AG04449 (cell line): ENCODE measurements at regions of chr16 and their contacts with region 1.

Region 1: DNA sequence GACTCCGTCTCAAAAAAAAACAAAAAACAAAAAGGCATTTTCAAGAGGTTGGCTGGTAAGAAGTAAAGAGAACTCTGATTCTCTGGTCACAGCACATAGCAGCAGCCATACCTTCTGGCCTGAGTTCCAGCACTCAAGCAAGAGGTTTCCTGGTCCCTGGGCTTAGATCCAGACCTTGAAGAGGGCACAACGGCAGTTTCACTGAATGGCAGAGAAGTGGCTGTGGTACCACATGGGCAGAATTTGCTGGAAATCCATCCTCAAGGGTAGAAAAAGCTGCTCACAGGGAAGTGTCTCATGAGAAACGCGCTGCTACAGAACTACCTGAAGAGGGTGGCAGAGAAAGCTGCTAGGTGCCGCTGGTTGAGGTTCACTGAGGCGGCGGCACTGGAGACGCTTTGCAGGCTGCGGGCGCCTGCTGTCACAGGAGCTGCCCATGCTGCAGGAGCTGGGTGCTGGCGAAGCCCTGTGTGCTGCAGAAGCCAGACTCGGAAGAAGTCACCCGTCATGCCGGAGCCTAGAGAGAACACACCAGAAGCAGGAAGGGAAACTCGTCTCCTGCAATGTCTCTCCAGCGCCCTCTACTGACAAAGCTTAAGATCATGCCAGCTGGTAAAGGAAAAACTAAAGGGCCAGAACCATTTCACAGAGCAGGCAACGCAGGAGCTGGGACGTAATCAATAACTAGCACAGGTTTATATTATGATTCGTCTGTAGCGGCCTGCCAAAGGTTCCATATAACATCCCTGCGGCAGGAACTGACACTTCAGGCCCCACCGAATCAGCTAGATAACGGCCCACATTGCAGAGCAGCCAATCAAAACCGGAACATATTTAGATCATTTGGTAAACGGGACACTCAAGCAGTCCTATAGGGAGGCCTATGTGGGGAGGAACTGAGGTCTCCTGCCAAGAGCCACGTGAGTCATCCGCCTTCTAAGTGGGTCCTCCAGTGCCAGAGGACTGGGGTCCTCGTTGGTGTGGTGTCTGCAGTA is 5.4 kb upstream of the ZNF213 start:
- DNase-seq: no peak
- H3K4me3 ChIP-seq: peak overlapping the region; percentile 48
- CTCF ChIP-seq: peak; percentile 86

Region 2: GRCh38 chr16:2948807-2949738 is 180.4 kb before region 1 on chr16:
- CTCF ChIA-PET with region 1: no interaction called
- POLR2A ChIA-PET with region 1: no interaction called
- DNase-seq: no peak
- H3K4me3 ChIP-seq: no peak overlapping the region
- CTCF ChIP-seq: no peak

Region 3: DNA sequence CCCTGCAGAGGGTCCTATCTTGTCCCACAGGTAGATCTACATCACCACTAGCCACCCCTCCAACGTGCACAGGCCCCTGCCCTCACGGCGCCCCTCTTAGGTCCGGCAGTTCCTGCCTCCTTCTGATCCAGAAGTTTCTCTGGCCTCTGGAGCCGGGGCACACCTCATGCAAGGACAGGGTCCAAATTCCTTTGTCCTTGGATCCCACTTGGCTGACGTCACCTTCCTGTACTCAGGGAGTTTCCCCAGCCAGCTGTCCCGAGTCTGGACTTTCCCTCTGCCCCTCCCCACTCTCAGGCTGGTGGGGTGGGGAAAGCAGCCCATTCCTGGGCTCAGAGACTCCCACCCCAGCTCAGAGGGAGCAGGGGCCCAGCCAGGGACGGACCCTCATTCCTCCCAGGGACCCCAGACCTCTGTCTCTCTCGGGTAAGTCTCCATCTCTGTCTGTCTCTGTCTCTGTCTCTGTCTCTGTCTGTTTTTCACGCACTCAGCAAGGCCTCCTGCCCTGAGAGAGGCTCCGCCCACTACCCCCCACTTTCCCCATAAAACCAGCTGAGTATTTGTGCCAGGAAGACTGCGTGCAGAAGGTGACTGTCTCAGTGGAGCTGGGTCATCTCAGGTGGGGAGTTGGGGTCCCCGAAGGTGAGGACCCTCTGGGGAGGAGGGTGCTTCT is 64.2 kb before region 1 on chr16 and contains the start of gene IL32:
- CTCF ChIA-PET with region 1: interaction called, 88 read pairs
- POLR2A ChIA-PET with region 1: no interaction called
- DNase-seq: peak; percentile 36
- H3K4me3 ChIP-seq: peak within 1 kb of the TSS; percentile 25
- CTCF ChIP-seq: no peak

Region 4: GRCh38 chr16:3106205-3106928 is 23.1 kb before region 1 on chr16:
- CTCF ChIA-PET with region 1: interaction called, 68 read pairs
- POLR2A ChIA-PET with region 1: no interaction called
- DNase-seq: no peak
- H3K4me3 ChIP-seq: peak overlapping the region; percentile 66
- CTCF ChIP-seq: no peak

Region 5: DNA sequence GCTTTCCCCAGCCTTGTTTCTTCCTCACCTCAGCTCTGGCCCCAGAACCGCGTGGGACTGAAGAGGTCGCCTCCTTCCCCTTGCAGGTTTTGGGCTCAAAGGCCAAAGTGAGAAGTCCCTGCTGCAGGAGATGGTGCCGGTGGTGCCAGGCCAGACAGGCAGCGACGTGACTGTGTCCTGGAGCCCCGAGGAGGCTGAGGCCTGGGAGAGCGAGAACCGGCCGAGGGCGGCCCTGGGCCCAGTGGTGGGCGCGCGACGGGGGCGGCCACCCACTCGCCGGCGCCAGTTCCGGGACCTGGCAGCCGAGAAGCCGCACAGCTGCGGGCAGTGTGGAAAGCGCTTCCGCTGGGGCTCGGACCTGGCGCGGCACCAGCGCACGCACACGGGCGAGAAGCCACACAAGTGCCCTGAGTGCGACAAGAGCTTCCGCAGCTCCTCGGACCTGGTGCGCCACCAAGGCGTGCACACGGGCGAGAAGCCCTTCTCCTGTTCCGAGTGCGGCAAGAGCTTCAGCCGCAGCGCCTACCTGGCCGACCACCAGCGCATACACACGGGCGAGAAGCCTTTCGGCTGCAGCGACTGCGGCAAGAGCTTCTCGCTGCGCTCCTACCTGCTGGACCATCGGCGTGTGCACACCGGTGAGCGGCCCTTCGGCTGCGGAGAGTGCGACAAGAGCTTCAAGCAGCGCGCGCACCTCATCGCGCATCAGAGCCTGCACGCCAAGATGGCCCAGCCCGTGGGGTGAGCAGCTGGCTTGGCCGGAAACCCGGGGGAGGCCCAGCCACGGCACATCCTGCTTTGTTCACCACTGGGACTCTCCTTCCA is 11.4 kb after region 1 on chr16:
- CTCF ChIA-PET with region 1: interaction called, 206 read pairs
- POLR2A ChIA-PET with region 1: interaction called, 7 read pairs
- DNase-seq: no peak
- H3K4me3 ChIP-seq: no peak overlapping the region
- CTCF ChIP-seq: no peak

Region 6: DNA sequence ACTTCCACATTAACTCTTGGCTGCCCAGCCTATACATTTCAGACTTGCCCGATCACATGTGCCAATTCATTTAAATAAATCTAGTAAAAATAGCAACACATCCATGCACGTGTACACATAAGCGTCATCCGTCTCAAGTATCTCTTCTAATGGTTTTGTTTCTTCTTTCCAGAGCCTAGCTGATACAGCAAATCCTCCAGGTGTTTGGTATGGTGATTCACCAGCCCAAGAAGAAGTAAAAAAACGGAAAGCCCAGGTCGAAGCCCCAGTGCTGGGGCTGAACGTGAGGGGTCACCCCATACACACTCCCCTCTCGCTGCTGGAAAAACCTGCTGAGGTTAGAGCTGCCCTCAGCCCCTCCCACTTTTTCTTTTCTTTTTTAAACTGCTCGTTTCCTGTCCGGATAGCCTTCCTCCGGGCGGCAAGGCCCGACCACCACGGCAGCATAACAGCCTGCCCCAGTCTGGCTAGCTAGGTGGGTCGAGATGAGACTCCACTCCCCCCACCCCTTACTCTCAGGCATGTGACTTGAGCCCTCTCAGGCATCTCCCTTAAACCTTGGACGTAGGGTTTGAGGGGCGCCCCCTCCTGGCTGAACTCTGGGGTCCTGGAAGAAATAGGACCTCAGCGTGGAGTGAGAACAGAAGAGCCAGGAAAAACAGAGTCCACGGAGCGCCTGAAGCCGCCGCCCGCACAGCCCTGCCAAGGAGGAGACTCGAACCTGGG is 44.6 kb after region 1 on chr16:
- CTCF ChIA-PET with region 1: interaction called, 21 read pairs
- POLR2A ChIA-PET with region 1: no interaction called
- DNase-seq: no peak
- H3K4me3 ChIP-seq: peak overlapping the region; percentile 23; the same call in 1 of the 2 replicates
- CTCF ChIP-seq: peak; percentile 37